Psoas muscle (tissue), 8 donors: ENCODE measurements at regions of chr10 and their contacts with region 1.

Region 1: GRCh38 chr10:19724287-19724686 is 91.9 kb upstream of the PLXDC2 start:
- DNase-seq: no peak
- ATAC-seq: no peak
- H3K4me3 ChIP-seq: no peak overlapping the region
- H3K27ac ChIP-seq: no peak overlapping the region
- H3K4me1 ChIP-seq: no peaks in the 10 kb centered on the region
- H3K27me3 ChIP-seq: no peaks in the 10 kb centered on the region
- CTCF ChIP-seq: no peak

Region 2: GRCh38 chr10:19791032-19791431 is 66.7 kb after region 1 on chr10:
- intact Hi-C with region 1: no loop called
- DNase-seq: no peak
- ATAC-seq: no peak
- H3K4me3 ChIP-seq: no peak overlapping the region
- H3K27ac ChIP-seq: no peak overlapping the region
- H3K4me1 ChIP-seq: no peaks in the 10 kb centered on the region
- H3K27me3 ChIP-seq: no peaks in the 10 kb centered on the region
- CTCF ChIP-seq: no peak

Region 3: GRCh38 chr10:20132816-20133215 is 408.5 kb after region 1 on chr10:
- intact Hi-C with region 1: loop called in 1 of 2 experiments (anchors 5 kb)
- DNase-seq: no peak
- ATAC-seq: no peak
- H3K4me3 ChIP-seq: no peak overlapping the region
- H3K27ac ChIP-seq: no peak overlapping the region
- H3K4me1 ChIP-seq: no peaks in the 10 kb centered on the region
- H3K27me3 ChIP-seq: no peaks in the 10 kb centered on the region
- CTCF ChIP-seq: no peak